ENCODE measurements at regions of chr9 and their contacts with region 1.

Region 1: DNA sequence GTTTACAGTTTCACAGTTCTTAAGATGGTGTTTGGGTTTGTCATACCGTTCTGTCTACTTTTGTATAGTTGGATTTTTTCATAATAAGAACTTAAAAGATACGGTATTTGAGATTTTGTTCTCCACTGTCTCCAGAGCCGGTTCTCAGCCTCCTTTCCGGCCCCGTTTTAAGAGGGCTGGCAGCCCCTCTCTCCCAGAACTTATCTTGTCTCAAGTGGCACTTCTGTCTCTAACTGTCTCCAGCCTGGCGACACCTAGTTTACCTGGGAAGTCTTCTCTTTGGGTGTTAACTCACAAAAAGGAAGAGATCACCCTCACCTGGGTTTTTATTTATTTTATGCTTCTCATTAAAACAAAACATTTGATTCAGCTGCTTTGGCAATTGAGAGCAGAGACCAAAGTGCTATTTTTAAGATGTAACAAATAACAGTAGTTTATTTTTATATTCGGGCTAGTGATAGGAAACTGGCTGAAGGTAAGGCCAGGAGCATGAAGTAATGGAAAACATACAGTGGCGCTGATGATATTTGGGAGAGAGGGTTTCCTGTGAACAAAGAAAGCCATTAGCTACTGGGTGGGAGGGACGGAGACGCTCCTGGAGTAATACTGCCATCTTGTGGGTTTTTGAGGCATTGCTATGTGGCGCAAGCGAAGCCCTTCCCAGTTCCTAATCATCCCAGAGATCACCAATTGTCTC is 48.3 kb downstream of the ACER2 start:
- DNase-seq: peak in 34 of 35 experiments; percentile 19 to 81 (median 44)
- ATAC-seq: peak; percentile 89 to 92 (median 90)
- H3K4me3 ChIP-seq: no peak overlapping the region
- H3K4me3 Mint-ChIP-seq: peak overlapping the region in 1 of 3 donors; percentile 47
- H3K27ac ChIP-seq: no peak overlapping the region
- H3K27ac Mint-ChIP-seq: no peak overlapping the region
- H3K4me1 ChIP-seq: peaks cover 0 to 5% of the 10 kb centered on the region in 2 experiments
- H3K4me1 Mint-ChIP-seq: peaks cover 5 to 9% (median 7%) of the 10 kb centered on the region in 3 donors
- H3K27me3 ChIP-seq: no peaks in the 10 kb centered on the region
- H3K27me3 Mint-ChIP-seq: peaks cover 1 to 4% of the 10 kb centered on the region in 2 donors

Region 2: DNA sequence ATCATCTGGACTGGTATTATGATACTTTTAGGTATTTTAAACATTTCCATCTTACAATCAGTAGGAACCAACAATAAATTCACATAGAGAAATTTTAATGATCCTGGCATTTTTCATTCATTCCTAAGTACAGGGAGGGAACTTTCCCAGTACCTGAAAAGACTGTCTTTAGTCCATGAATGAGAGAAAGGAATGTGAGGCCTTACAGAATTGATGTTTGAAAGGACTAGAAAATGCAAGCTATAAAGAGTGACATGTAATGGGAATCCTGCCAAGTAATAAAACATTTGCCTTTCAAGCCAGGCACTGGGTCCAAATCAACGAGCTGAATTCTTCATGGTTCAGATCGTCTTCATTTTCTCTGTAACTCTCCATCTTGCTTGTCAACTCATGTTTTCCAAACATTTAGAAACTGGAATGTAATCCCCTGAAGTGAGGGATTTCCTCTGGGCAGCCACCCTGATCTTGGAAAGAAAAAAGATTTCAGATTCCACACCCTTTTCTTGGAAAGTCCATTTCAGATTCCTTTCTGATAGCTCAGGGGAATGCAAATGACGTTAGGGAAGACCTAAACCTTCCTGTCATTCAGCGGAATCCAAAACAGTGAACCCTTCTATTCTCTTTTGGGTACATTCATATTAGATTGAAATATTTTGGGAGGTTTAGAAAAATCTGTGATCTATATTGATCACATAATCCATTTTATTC is 1562.5 kb before region 1 on chr9:
- CTCF ChIA-PET with region 1: no interaction called
- POLR2A ChIA-PET with region 1: no interaction called
- DNase-seq: no peak
- ATAC-seq: no peak
- H3K4me3 ChIP-seq: no peak overlapping the region
- H3K4me3 Mint-ChIP-seq: no peak overlapping the region
- H3K27ac ChIP-seq: no peak overlapping the region
- H3K27ac Mint-ChIP-seq: no peak overlapping the region
- H3K4me1 ChIP-seq: no peaks in the 10 kb centered on the region
- H3K4me1 Mint-ChIP-seq: no peaks in the 10 kb centered on the region
- H3K27me3 ChIP-seq: no peaks in the 10 kb centered on the region
- H3K27me3 Mint-ChIP-seq: no peaks in the 10 kb centered on the region

Region 3: DNA sequence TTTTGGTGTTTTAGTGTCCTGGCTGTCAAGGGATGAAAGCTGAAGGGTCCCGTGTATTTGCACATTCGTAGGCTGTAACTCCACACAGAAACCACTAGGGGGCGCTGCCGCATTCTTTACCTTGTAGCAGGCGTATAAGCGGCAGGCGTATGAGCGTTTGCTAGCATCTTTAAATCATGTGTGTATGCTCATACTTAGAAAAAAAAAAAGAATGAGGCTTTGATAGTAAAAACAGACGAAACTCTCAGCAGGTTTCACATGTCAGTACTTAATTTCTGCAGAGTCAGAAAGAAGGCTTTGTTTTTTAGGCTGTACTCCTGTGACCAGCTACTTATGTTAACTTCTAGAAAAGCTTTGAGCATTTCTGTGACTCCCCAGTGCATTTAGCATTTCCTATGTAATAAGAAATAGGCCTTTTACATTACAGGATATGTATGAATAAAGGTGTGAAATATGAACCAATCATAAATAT is 1202.0 kb before region 1 on chr9:
- CTCF ChIA-PET with region 1: interaction called, 10 to 16 read pairs
- POLR2A ChIA-PET with region 1: no interaction called
- DNase-seq: peak; percentile 12 to 81 (median 59)
- ATAC-seq: peak; percentile 61 to 76 (median 63)
- H3K4me3 ChIP-seq: no peak overlapping the region
- H3K4me3 Mint-ChIP-seq: no peak overlapping the region
- H3K27ac ChIP-seq: no peak overlapping the region
- H3K27ac Mint-ChIP-seq: no peak overlapping the region
- H3K4me1 ChIP-seq: no peaks in the 10 kb centered on the region
- H3K4me1 Mint-ChIP-seq: peaks cover 0 to 6% (median 0%) of the 10 kb centered on the region in 3 donors
- H3K27me3 ChIP-seq: peaks cover 0 to 2% of the 10 kb centered on the region in 2 experiments
- H3K27me3 Mint-ChIP-seq: peaks cover 6 to 9% of the 10 kb centered on the region in 2 donors

Region 4: GRCh38 chr9:19085295-19085694 is 371.8 kb before region 1 on chr9:
- CTCF ChIA-PET with region 1: interaction called, 8 to 19 read pairs
- POLR2A ChIA-PET with region 1: interaction called, 4 to 7 read pairs
- DNase-seq: peak in 3 of 35 experiments; percentile 7 to 67 (median 7)
- ATAC-seq: peak in 2 of 4 experiments; percentile 62 to 75
- H3K4me3 ChIP-seq: no peak overlapping the region
- H3K4me3 Mint-ChIP-seq: no peak overlapping the region
- H3K27ac ChIP-seq: no peak overlapping the region
- H3K27ac Mint-ChIP-seq: no peak overlapping the region
- H3K4me1 ChIP-seq: no peaks in the 10 kb centered on the region
- H3K4me1 Mint-ChIP-seq: peaks cover 0 to 5% (median 2%) of the 10 kb centered on the region in 3 donors
- H3K27me3 ChIP-seq: no peaks in the 10 kb centered on the region
- H3K27me3 Mint-ChIP-seq: no peaks in the 10 kb centered on the region

Region 5: GRCh38 chr9:19184144-19184917 is 272.8 kb before region 1 on chr9:
- CTCF ChIA-PET with region 1: no interaction called
- POLR2A ChIA-PET with region 1: interaction called in 1 of 2 experiments, 13 read pairs
- DNase-seq: peak; percentile 51 to 87 (median 73)
- ATAC-seq: peak; percentile 99 to 100 (median 100)
- H3K4me3 ChIP-seq: no peak overlapping the region
- H3K4me3 Mint-ChIP-seq: peak overlapping the region; percentile 15 to 64 (median 31)
- H3K27ac ChIP-seq: peak overlapping the region; percentile 93
- H3K27ac Mint-ChIP-seq: peak overlapping the region; percentile 97 to 98
- H3K4me1 ChIP-seq: peaks cover 0 to 44% of the 10 kb centered on the region in 2 experiments
- H3K4me1 Mint-ChIP-seq: peaks cover 14 to 35% (median 29%) of the 10 kb centered on the region in 3 donors
- H3K27me3 ChIP-seq: no peaks in the 10 kb centered on the region
- H3K27me3 Mint-ChIP-seq: no peaks in the 10 kb centered on the region

Region 6: GRCh38 chr9:19965336-19965735 is 508.2 kb after region 1 on chr9:
- CTCF ChIA-PET with region 1: interaction called in 1 of 2 experiments, 12 read pairs
- POLR2A ChIA-PET with region 1: no interaction called
- DNase-seq: no peak
- ATAC-seq: no peak
- H3K4me3 ChIP-seq: no peak overlapping the region
- H3K4me3 Mint-ChIP-seq: no peak overlapping the region
- H3K27ac ChIP-seq: no peak overlapping the region
- H3K27ac Mint-ChIP-seq: no peak overlapping the region
- H3K4me1 ChIP-seq: no peaks in the 10 kb centered on the region
- H3K4me1 Mint-ChIP-seq: peaks cover 5 to 10% (median 6%) of the 10 kb centered on the region in 3 donors
- H3K27me3 ChIP-seq: no peaks in the 10 kb centered on the region
- H3K27me3 Mint-ChIP-seq: peaks cover 0 to 2% of the 10 kb centered on the region in 2 donors